ENCODE measurements at regions of chr1 and their contacts with region 1.

Region 1: DNA sequence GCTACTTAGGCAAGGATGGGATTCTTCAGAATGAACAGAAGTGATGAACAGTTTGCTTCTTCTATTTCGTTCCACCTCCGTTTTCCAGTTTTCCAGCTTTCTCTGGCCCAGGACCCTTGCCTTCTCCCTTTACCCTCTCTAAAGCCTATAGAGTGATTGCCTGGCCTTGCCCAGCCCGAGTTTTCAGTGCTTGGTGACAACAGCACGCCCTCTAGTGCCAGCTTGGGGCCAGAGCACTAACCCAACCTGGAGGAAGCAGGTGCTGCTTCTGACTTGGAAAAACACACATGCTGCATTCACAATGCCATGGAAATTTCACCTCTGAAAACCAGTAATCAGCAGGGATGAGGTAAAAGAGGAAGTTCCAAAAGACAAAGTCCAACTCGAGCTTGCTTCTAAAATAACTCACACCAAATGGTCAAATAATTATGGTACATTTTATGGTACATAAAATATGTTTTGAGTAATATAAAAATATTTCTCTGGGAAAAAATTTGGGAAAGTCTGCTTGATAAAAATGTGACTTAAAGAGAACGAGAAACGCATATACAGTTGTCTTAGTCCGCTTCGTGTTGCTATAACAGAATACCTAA is 26.1 kb downstream of the UBE2T start:
- DNase-seq: peak; percentile 85
- ATAC-seq: peak; percentile 89
- H3K4me3 Mint-ChIP-seq: no peak overlapping the region
- H3K27ac Mint-ChIP-seq: no peak overlapping the region
- H3K4me1 Mint-ChIP-seq: peaks cover 14% of the 10 kb centered on the region
- H3K27me3 Mint-ChIP-seq: peaks cover 21% of the 10 kb centered on the region

Region 2: GRCh38 chr1:202162047-202162417 is 153.6 kb before region 1 on chr1:
- CTCF ChIA-PET with region 1: no interaction called
- POLR2A ChIA-PET with region 1: no interaction called
- DNase-seq: peak; percentile 76
- ATAC-seq: peak; percentile 34
- H3K4me3 Mint-ChIP-seq: peak overlapping the region; percentile 91
- H3K27ac Mint-ChIP-seq: peak overlapping the region; percentile 100
- H3K4me1 Mint-ChIP-seq: peaks cover 85% of the 10 kb centered on the region
- H3K27me3 Mint-ChIP-seq: no peaks in the 10 kb centered on the region

Region 3: DNA sequence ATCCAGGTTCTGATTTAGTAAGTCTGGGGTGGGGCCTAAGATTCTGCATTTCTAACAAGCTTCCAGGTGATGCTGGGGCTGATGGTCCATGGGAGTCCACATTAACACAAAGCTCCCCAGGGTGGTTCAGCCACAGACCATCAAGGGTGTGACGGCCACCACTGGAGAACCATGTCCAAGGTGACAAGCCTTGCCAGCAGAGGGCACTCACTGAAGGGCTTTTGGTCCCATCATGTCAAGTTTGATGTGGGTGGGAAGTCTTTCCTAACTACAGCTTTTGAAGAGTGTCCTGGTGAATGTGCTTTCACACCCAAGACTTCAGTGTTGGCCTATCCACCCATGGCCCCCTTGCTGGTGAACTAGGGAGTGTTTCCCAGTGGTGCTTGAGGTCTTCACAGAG is 41.1 kb before region 1 on chr1:
- CTCF ChIA-PET with region 1: interaction called, 23 read pairs
- POLR2A ChIA-PET with region 1: no interaction called
- DNase-seq: peak; percentile 69
- ATAC-seq: peak; percentile 80
- H3K4me3 Mint-ChIP-seq: no peak overlapping the region
- H3K27ac Mint-ChIP-seq: no peak overlapping the region
- H3K4me1 Mint-ChIP-seq: peaks cover 3% of the 10 kb centered on the region
- H3K27me3 Mint-ChIP-seq: peaks cover 24% of the 10 kb centered on the region

Region 4: GRCh38 chr1:202329891-202330290 is 14.2 kb after region 1 on chr1:
- CTCF ChIA-PET with region 1: interaction called, 15 read pairs
- POLR2A ChIA-PET with region 1: no interaction called
- DNase-seq: no peak
- ATAC-seq: no peak
- H3K4me3 Mint-ChIP-seq: no peak overlapping the region
- H3K27ac Mint-ChIP-seq: no peak overlapping the region
- H3K4me1 Mint-ChIP-seq: peaks cover 3% of the 10 kb centered on the region
- H3K27me3 Mint-ChIP-seq: no peaks in the 10 kb centered on the region

Region 5: DNA sequence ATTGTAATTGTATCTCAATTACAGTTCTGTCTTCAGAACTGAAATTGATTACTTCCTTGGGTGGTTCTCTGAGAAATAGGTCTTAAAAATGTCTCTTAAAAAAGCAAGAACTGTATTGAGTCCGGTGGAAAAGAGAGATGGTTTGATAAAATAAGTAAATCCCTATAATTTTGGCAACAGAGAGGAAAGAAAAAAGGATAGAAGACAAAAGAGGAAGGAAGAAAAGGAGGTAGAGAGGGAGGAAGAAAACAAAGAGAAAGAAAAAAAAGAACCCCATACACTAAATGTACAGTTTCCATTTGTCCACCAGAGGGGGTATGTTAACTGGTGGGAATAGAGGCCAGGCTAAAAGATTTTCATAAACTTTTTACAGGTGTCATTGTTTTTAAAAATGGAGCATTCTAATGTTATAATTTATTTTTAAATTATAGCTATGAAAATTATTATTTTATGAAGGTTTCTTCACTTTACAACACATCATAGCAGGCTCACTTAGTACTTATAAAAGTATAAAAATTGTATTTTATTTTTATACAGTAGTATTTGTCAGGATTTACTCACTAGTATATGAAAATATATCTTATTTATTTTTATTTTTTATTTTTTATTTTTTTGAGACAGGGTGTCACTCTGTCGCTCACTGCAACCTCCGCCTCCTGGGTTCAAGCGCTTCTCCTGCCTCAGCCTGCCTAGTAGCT is 28.1 kb after region 1 on chr1:
- CTCF ChIA-PET with region 1: no interaction called
- POLR2A ChIA-PET with region 1: no interaction called
- DNase-seq: no peak
- ATAC-seq: no peak
- H3K4me3 Mint-ChIP-seq: peak overlapping the region; percentile 71
- H3K27ac Mint-ChIP-seq: peak overlapping the region; percentile 91
- H3K4me1 Mint-ChIP-seq: peaks cover 39% of the 10 kb centered on the region
- H3K27me3 Mint-ChIP-seq: no peaks in the 10 kb centered on the region

Measured in activated CD8-positive, alpha-beta T cell treated with anti-CD3 and anti-CD28 coated beads, Interleukin-2, amount 10 ng/mL, durations not matched to agents 7 days and 5 days (primary cell).